Heart right ventricle (tissue), 16 donors: ENCODE measurements at regions of chr1 and their contacts with region 1.

Region 1: GRCh38 chr1:236113324-236114032 is 28.9 kb upstream of the GPR137B start:
- DNase-seq: peak in 1 of 2 donors; percentile 18
- ATAC-seq: peak; percentile 38 to 92 (median 77)
- H3K4me3 ChIP-seq: no peak overlapping the region
- H3K27ac ChIP-seq: peak overlapping the region in 9 of 10 donors; percentile 46 to 84 (median 72)
- H3K4me1 ChIP-seq: peaks cover 0 to 5% (median 0%) of the 10 kb centered on the region in 9 donors
- H3K27me3 ChIP-seq: no peaks in the 10 kb centered on the region
- CTCF ChIP-seq: no peak

Region 2: GRCh38 chr1:236181059-236181458 is 67.6 kb after region 1 on chr1:
- intact Hi-C with region 1: no loop called
- DNase-seq: no peak
- ATAC-seq: no peak
- H3K4me3 ChIP-seq: no peak overlapping the region
- H3K27ac ChIP-seq: no peak overlapping the region
- H3K4me1 ChIP-seq: peaks cover 0 to 5% (median 0%) of the 10 kb centered on the region in 9 donors
- H3K27me3 ChIP-seq: no peaks in the 10 kb centered on the region
- CTCF ChIP-seq: no peak

Region 3: DNA sequence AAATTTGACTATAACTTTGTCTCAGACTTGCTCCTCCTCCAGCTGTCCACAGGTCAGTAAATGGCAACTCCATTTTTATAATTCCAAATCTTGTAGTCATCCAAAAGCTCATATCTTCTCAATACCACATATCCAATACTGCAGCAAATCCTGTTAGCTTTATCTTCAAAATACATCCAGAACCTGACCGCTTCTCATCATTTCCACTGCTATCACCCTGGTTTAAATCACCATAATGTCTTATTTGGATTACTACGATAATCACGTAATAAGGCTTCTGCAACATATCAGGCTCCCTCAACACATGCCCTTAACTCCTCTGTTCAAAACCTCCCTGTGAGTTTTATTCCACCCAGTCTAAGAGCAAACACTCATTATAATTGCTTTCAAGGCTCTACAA is 133.8 kb after region 1 on chr1:
- intact Hi-C with region 1: no loop called
- DNase-seq: no peak
- ATAC-seq: no peak
- H3K4me3 ChIP-seq: no peak overlapping the region
- H3K27ac ChIP-seq: no peak overlapping the region
- H3K4me1 ChIP-seq: peaks cover 0 to 11% (median 0%) of the 10 kb centered on the region in 9 donors
- H3K27me3 ChIP-seq: no peaks in the 10 kb centered on the region
- CTCF ChIP-seq: no peak

Region 4: DNA sequence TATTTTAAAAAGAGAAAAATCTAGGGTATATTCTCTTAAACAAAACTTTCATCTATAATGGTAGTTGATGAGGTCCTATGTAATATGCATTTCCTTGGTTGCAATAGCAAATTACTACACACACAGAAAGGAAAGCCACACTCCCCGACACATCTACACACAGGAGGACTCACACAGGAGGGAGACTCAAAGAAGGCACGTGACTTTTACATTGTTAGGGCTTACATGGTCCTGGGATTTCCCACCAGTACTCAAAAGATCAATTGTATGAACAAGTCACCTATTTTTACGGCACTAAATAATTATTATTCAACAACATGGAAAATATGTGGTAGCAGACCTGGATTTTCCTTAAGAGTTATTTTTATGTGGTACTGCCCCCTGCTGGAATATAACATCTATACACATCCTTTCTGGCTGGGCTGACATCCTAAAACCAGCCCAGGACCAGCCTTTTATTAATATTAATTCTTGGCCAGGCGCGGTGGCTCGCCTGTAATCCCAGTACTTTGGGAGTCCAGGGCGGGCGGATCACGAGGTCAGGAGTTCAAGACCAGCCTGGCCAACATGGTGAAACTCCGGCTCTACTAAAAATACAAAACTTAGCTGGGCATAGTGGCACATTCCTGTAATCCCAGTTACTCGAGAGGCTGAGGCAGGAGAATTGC is 376.4 kb after region 1 on chr1:
- intact Hi-C with region 1: loop called (anchors 2 to 5 kb)
- DNase-seq: peak in 1 of 2 donors; percentile 23
- ATAC-seq: peak in 6 of 8 donors; percentile 49 to 74 (median 58)
- H3K4me3 ChIP-seq: peak overlapping the region in 3 of 10 donors; percentile 3 to 25 (median 20)
- H3K27ac ChIP-seq: peak overlapping the region in 2 of 10 donors; percentile 9 to 19
- H3K4me1 ChIP-seq: peaks cover 0 to 23% (median 6%) of the 10 kb centered on the region in 9 donors
- H3K27me3 ChIP-seq: no peaks in the 10 kb centered on the region
- CTCF ChIP-seq: peak; percentile 34 to 71 (median 62)

Region 5: GRCh38 chr1:236534151-236534651 is 420.7 kb after region 1 on chr1:
- intact Hi-C with region 1: loop called in 9 of 10 experiments (anchors 5 to 10 kb)
- DNase-seq: no peak
- ATAC-seq: no peak
- H3K4me3 ChIP-seq: no peak overlapping the region
- H3K27ac ChIP-seq: no peak overlapping the region
- H3K4me1 ChIP-seq: peaks cover 0 to 50% (median 19%) of the 10 kb centered on the region in 9 donors
- H3K27me3 ChIP-seq: no peaks in the 10 kb centered on the region
- CTCF ChIP-seq: no peak